ENCODE measurements at regions of chr6 and their contacts with region 1.

Region 1: GRCh38 chr6:144055121-144055931 is 40.0 kb downstream of the SF3B5 start:
- DNase-seq: peak; percentile 78
- ATAC-seq: peak; percentile 95
- H3K4me3 Mint-ChIP-seq: peak overlapping the region; percentile 84
- H3K27ac Mint-ChIP-seq: peak overlapping the region; percentile 98
- H3K4me1 Mint-ChIP-seq: peaks cover 36% of the 10 kb centered on the region
- H3K27me3 Mint-ChIP-seq: no peaks in the 10 kb centered on the region

Region 2: GRCh38 chr6:144036064-144036834 is 19.1 kb before region 1 on chr6:
- CTCF ChIA-PET with region 1: interaction called, 16 read pairs
- POLR2A ChIA-PET with region 1: interaction called, 3 read pairs
- DNase-seq: peak; percentile 51
- ATAC-seq: peak; percentile 85
- H3K4me3 Mint-ChIP-seq: peak overlapping the region; percentile 46
- H3K27ac Mint-ChIP-seq: peak overlapping the region; percentile 62
- H3K4me1 Mint-ChIP-seq: peaks cover 18% of the 10 kb centered on the region
- H3K27me3 Mint-ChIP-seq: no peaks in the 10 kb centered on the region

Region 3: DNA sequence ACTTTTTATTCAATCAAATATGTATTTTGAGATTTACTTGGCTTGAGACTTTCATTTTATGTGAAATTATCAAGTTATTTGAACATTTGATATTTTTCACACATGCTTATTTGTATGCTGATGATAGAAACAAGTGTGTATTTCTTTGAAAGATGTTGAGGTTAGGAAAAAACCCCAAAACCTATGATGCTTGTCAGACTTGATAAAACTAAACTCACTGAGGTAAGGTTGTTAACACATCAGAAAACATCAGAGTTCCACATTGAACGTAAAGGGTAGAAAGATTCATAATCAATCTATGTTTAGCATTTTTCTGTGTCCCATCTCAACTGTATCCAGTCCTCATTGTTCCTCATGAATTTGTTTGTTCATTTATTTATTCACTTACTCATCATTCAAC is 27.8 kb after region 1 on chr6:
- CTCF ChIA-PET with region 1: no interaction called
- POLR2A ChIA-PET with region 1: no interaction called
- DNase-seq: no peak
- ATAC-seq: no peak
- H3K4me3 Mint-ChIP-seq: no peak overlapping the region
- H3K27ac Mint-ChIP-seq: no peak overlapping the region
- H3K4me1 Mint-ChIP-seq: no peaks in the 10 kb centered on the region
- H3K27me3 Mint-ChIP-seq: no peaks in the 10 kb centered on the region